GM12878 (cell line): ENCODE measurements at regions of chr3 and their contacts with region 1.

Region 1: GRCh38 chr3:112498914-112499711 is at the start of gene BTLA:
- DNase-seq: peak; percentile 79
- ATAC-seq: peak; percentile 64
- H3K4me3 ChIP-seq: peak within 1 kb of the TSS; percentile 89
- H3K27ac ChIP-seq: peak within 1 kb of the TSS; percentile 87
- H3K4me1 ChIP-seq: peaks cover 13% of the 10 kb centered on the region
- H3K27me3 ChIP-seq: no peaks in the 10 kb centered on the region
- CTCF ChIP-seq: no peak
- EP300 ChIP-seq: peak in 1 of 2 experiments; percentile 39; a peak in 1 of 4 replicates
- POLR2A ChIP-seq: peak; percentile 52; the same call in 1 of the 2 replicates
- RAD21 ChIP-seq: no peak
- polyA plus RNA-seq, gene BTLA: 101 to 134 TPM

Region 2: GRCh38 chr3:112117841-112118571 is 381.1 kb before region 1 on chr3:
- CTCF ChIA-PET with region 1: interaction called, 4 read pairs
- POLR2A ChIA-PET with region 1: interaction called, 9 read pairs
- RAD21 ChIA-PET with region 1: interaction called, 46 read pairs
- SMC1A ChIA-PET with region 1: interaction called, 14 read pairs
- in situ Hi-C with region 1: no loop called
- intact Hi-C with region 1: no loop called
- DNase-seq: no peak
- ATAC-seq: peak; percentile 48
- H3K4me3 ChIP-seq: peak overlapping the region; percentile 48; the same call in 1 of the 2 replicates
- H3K27ac ChIP-seq: peak overlapping the region; percentile 95
- H3K4me1 ChIP-seq: peaks cover 92% of the 10 kb centered on the region
- H3K27me3 ChIP-seq: no peaks in the 10 kb centered on the region
- CTCF ChIP-seq: peak; percentile 32 to 34 (median 33); a peak in 5 of 6 replicates
- EP300 ChIP-seq: no peak
- POLR2A ChIP-seq: peak; percentile 47; the same call in 1 of the 2 replicates
- RAD21 ChIP-seq: peak; percentile 43

Region 3: DNA sequence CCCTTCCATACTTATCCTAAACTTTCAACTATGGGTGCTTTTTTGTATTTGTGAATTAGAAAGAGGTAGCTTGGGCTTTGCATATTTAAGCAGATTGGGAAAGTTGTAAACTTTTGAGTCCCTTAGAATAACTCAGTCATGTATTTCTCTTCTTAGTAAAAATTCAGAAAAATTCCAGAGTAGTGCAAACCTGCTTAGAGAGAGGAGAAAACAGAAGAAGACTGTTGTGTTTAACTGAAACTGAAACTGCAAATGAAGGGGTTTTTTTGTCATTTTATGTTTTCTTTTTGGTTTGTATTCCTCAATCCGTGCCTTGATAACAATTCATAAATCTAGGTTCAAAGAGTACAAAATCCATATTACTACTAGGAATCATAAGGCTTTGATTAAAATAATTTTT is 134.8 kb before region 1 on chr3:
- CTCF ChIA-PET with region 1: no interaction called
- POLR2A ChIA-PET with region 1: interaction called, 3 read pairs
- RAD21 ChIA-PET with region 1: interaction called, 13 read pairs
- SMC1A ChIA-PET with region 1: interaction called, 3 read pairs
- in situ Hi-C with region 1: no loop called
- intact Hi-C with region 1: no loop called
- DNase-seq: no peak
- ATAC-seq: peak; percentile 79
- H3K4me3 ChIP-seq: peak overlapping the region; percentile 26; the same call in 1 of the 2 replicates
- H3K27ac ChIP-seq: peak overlapping the region; percentile 84
- H3K4me1 ChIP-seq: peaks cover 29% of the 10 kb centered on the region
- H3K27me3 ChIP-seq: no peaks in the 10 kb centered on the region
- CTCF ChIP-seq: no peak
- EP300 ChIP-seq: no peak
- POLR2A ChIP-seq: no peak
- RAD21 ChIP-seq: no peak

Region 4: DNA sequence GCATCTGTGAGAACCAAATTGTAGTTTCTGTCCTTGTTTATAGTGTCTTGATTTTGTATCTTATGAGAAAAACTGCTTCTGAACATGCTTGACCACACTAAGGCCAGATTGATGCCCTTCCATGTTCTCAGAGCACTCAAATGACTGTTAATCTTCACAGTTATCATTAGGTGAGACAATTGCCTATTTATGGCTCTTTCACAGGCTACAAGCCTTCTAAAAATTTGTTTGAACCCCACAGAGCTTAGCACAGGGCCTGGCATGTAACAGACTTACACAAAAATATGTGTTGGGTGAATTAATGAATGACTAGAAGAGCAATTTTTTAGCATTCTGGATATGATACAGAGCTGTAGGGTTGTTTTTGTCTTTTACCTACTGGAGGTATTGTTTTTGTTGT is 43.0 kb before region 1 on chr3:
- CTCF ChIA-PET with region 1: interaction called, 7 read pairs
- POLR2A ChIA-PET with region 1: interaction called, 20 read pairs
- RAD21 ChIA-PET with region 1: interaction called, 262 read pairs
- SMC1A ChIA-PET with region 1: interaction called, 57 read pairs
- in situ Hi-C with region 1: no loop called
- intact Hi-C with region 1: no loop called
- DNase-seq: no peak
- ATAC-seq: peak; percentile 46
- H3K4me3 ChIP-seq: no peak overlapping the region
- H3K27ac ChIP-seq: peak overlapping the region; percentile 61
- H3K4me1 ChIP-seq: peaks cover 17% of the 10 kb centered on the region
- H3K27me3 ChIP-seq: no peaks in the 10 kb centered on the region
- CTCF ChIP-seq: no peak
- EP300 ChIP-seq: peak; percentile 59 to 68; a peak in 1 of 4 replicates
- POLR2A ChIP-seq: no peak
- RAD21 ChIP-seq: peak; percentile 21; the same call in 1 of the 2 replicates

Region 5: DNA sequence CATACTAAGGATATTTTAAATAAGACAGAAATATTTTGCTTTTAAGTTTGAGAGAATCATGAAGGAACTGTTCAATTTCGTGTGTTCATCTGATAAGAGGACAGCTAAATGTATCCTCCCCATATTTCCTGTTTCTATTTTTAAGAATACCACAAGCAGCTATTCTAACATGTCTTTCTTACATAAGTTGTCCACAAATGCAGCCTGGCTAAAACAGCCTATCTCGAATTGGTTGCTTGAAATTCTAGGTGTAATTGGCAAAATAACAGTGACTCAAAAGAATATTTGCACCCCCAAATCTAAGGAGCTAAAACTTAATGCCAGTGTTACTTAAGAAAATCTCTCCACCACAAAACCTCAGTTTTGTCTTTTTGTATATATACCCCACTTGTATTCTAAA is 34.8 kb before region 1 on chr3:
- CTCF ChIA-PET with region 1: interaction called, 7 read pairs
- POLR2A ChIA-PET with region 1: interaction called, 14 read pairs
- RAD21 ChIA-PET with region 1: interaction called, 262 read pairs
- SMC1A ChIA-PET with region 1: interaction called, 57 read pairs
- in situ Hi-C with region 1: no loop called
- intact Hi-C with region 1: no loop called
- DNase-seq: peak; percentile 67
- ATAC-seq: peak; percentile 45
- H3K4me3 ChIP-seq: peak overlapping the region; percentile 16; the same call in 1 of the 2 replicates
- H3K27ac ChIP-seq: peak overlapping the region; percentile 77
- H3K4me1 ChIP-seq: peaks cover 61% of the 10 kb centered on the region
- H3K27me3 ChIP-seq: no peaks in the 10 kb centered on the region
- CTCF ChIP-seq: no peak
- EP300 ChIP-seq: peak; percentile 10 to 78; a peak in 2 of 4 replicates
- POLR2A ChIP-seq: no peak
- RAD21 ChIP-seq: no peak